ENCODE measurements at regions of chr6 and their contacts with region 1.

Region 1: DNA sequence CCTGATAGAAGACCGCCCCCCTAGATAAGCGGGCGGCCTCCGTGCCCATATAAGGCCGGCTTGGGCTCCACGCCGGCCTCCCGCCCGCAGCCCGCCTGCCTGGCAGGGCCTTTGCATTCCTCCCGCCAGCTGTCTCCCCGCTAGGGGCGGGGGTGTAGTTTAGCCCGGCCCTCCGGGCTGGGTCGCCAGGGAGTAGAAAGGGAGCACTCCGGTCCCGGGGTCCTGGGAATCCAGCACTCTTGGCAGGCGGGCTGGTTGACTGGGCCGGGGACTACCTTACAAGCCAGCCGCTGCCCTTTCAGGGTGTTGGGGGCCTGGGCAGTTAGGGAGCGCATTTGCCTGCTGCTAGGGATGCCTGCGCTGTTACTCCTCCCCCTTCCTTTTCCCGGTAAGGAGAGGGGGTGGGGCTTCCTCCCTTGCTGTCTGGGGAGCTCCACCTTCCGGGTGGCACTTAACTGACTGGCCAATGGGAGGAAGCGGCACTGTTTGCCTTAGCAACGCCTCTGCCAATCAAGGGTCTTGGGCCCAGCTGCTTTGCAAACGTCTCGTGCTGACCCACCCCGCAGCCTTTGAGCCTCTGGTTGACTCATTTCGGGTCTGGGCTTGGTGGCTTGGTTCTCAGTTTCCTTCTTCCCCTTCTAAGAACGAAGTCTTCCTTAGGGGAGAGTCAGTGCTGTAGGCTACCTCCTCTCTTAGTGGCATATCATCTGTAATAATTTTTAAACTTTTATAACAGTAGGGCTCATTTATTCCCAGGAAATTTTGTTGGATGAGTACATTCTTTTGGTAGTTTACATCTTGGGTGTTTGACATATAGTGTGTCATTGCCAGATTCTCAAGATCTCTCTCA is 3.4 kb downstream of the SRF start:
- DNase-seq: peak; percentile 94
- ATAC-seq: peak; percentile 75
- H3K4me3 ChIP-seq: peak overlapping the region; percentile 37 to 48
- H3K27ac ChIP-seq: peak overlapping the region; percentile 52
- H3K4me1 ChIP-seq: peaks cover 28 to 37% of the 10 kb centered on the region in 2 experiments
- H3K27me3 ChIP-seq: no peaks in the 10 kb centered on the region
- CTCF ChIP-seq: no peak
- POLR2A ChIP-seq: no peak
- RAD21 ChIP-seq: no peak

Region 2: GRCh38 chr6:43059168-43060033 is 115.1 kb before region 1 on chr6 and contains the starts of genes KLC4 and MRPL2:
- CTCF ChIA-PET with region 1: no interaction called
- POLR2A ChIA-PET with region 1: no interaction called
- RAD21 ChIA-PET with region 1: no interaction called
- intact Hi-C with region 1: loop called (anchors 5 kb)
- DNase-seq: peak; percentile 97
- ATAC-seq: peak; percentile 96
- H3K4me3 ChIP-seq: peak within 1 kb of the TSS; percentile 89
- H3K27ac ChIP-seq: peak within 1 kb of the TSS; percentile 65
- H3K4me1 ChIP-seq: peaks cover 10 to 25% of the 10 kb centered on the region in 2 experiments; a peak in 3 of 4 replicates
- H3K27me3 ChIP-seq: no peaks in the 10 kb centered on the region
- CTCF ChIP-seq: no peak
- POLR2A ChIP-seq: no peak
- RAD21 ChIP-seq: no peak
- total RNA-seq, gene KLC4: 16.2 TPM
- total RNA-seq, gene MRPL2: 123 TPM

Region 3: DNA sequence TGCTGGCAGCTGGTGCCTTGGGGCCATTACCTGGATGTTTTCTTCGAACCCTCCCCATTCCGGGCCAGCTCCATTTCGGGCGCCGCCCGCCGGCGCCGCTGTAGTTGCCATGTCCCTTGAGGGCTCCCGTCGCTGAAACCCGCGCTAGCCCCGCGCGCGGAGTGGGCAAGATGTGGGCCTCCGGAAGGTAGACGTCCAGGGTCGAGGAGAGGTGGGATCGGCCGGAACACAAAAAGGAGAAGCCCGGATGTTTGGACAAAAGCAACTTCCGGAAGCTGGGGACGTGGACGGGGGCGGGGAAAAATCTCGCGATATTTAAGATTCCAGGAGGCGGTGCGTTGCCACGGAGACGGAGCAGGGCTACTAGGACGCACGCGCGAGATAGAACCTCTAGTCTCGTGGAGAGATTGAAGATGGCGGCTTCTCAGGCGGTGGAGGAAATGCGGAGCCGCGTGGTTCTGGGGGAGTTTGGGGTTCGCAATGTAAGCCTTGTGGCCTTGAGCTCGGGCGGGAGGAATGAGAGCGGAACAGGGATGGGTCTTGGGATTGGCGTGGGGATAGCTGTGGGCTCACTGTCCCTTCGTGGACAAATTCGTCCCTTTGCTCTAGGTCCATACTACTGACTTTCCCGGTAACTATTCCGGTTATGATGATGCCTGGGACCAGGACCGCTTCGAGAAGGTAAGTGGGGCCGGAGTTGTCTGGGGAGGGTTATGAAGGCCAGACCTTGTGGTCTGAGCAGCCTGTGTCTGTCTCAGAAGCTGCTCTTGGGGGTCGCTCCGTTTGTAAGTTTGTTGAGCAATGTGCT is 342.4 kb after region 1 on chr6 and contains the starts of genes POLR1C and YIPF3:
- CTCF ChIA-PET with region 1: no interaction called
- POLR2A ChIA-PET with region 1: no interaction called
- RAD21 ChIA-PET with region 1: no interaction called
- intact Hi-C with region 1: loop called (anchors 5 kb)
- DNase-seq: peak; percentile 98
- ATAC-seq: peak; percentile 89
- H3K4me3 ChIP-seq: peak within 1 kb of the TSS; percentile 92 to 100
- H3K27ac ChIP-seq: peak within 1 kb of the TSS; percentile 61
- H3K4me1 ChIP-seq: peaks cover 14 to 21% of the 10 kb centered on the region in 2 experiments; a peak in 3 of 4 replicates
- H3K27me3 ChIP-seq: no peaks in the 10 kb centered on the region
- CTCF ChIP-seq: no peak
- POLR2A ChIP-seq: peak; percentile 92
- RAD21 ChIP-seq: no peak
- total RNA-seq, gene POLR1C: 84.6 TPM
- total RNA-seq, gene YIPF3: 84.5 TPM

Measured in HCT116 (cell line).